CD4-positive, alpha-beta memory T cell (primary cell): ENCODE measurements at regions of chr7 and their contacts with region 1.

Region 1: GRCh38 chr7:135211179-135211945 is at the start of gene WDR91:
- DNase-seq: peak; percentile 89 to 95 (median 90)
- H3K4me3 ChIP-seq: peak within 1 kb of the TSS; percentile 71 to 80
- H3K4me3 Mint-ChIP-seq: peak within 1 kb of the TSS; percentile 96 to 99 (median 98)
- H3K27ac ChIP-seq: peak within 1 kb of the TSS; percentile 85
- H3K27ac Mint-ChIP-seq: peak within 1 kb of the TSS; percentile 92 to 99 (median 99)
- H3K4me1 ChIP-seq: peaks cover 27% of the 10 kb centered on the region
- H3K4me1 Mint-ChIP-seq: peaks cover 13 to 46% (median 28%) of the 10 kb centered on the region in 4 donors
- H3K27me3 ChIP-seq: no peaks in the 10 kb centered on the region
- H3K27me3 Mint-ChIP-seq: no peaks in the 10 kb centered on the region
- total RNA-seq, gene WDR91: 29.1 to 29.4 TPM

Region 2: GRCh38 chr7:134458806-134459698 is 752.3 kb before region 1 on chr7 and contains the start of gene AKR1B1:
- CTCF ChIA-PET with region 1: no interaction called
- POLR2A ChIA-PET with region 1: interaction called, 4 read pairs
- intact Hi-C with region 1: loop called (anchors 2 kb)
- DNase-seq: peak; percentile 84 to 89 (median 86)
- H3K4me3 ChIP-seq: peak within 1 kb of the TSS; percentile 25 to 62
- H3K4me3 Mint-ChIP-seq: peak within 1 kb of the TSS; percentile 91 to 94 (median 92)
- H3K27ac ChIP-seq: peak within 1 kb of the TSS; percentile 55
- H3K27ac Mint-ChIP-seq: peak within 1 kb of the TSS; percentile 71 to 95 (median 88)
- H3K4me1 ChIP-seq: peaks cover 36% of the 10 kb centered on the region
- H3K4me1 Mint-ChIP-seq: peaks cover 38 to 57% (median 43%) of the 10 kb centered on the region in 4 donors
- H3K27me3 ChIP-seq: no peaks in the 10 kb centered on the region
- H3K27me3 Mint-ChIP-seq: no peaks in the 10 kb centered on the region
- total RNA-seq, gene AKR1B1: 81.2 to 91.1 TPM

Region 3: DNA sequence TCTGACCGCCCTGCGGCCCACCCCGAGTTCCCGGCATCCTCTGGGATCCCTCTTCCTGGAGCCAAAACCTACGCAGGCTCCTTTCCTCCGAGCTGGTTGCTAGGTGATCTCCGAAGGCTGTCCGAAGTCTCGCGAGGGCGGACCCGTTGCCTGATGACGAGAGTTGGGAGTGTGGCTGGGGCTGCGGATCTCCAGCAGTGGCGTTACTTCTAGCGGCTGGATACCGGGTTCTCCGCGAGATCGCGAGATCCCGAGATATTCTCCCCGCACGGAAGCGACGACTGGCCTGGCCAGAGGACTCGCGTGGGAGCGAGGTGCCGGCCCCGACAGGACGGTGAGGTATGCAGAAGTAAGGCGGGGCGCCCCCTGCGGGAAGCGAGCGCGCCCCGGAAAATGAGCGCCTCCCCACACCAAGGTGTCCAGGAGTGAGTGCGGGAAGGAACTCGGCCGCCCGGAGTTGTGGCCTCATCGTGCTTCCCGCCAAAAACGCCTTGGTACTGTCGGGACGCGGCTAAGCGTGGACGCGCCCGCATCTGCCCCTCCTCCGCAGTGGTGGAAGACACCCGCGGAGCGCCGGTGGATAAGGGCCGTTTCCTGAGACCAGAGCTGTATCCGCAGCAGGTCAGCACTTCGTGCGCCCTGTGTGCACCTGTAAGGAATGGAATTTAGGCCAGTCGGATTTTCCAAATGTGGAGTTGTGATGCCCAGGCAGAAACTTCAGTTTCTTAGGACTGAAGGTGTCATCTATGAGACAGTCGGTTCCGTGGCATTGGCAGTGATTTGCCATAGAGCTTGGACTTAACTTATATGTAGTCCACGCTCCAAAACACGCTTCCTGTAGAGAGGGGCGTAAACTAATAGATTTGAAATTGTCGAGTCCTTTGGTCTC is 224.8 kb before region 1 on chr7 and contains the start of gene AGBL3:
- CTCF ChIA-PET with region 1: interaction called, 12 read pairs
- POLR2A ChIA-PET with region 1: interaction called, 20 read pairs
- intact Hi-C with region 1: loop called (anchors 1 kb)
- DNase-seq: peak; percentile 87 to 91 (median 88)
- H3K4me3 ChIP-seq: peak within 1 kb of the TSS; percentile 60 to 86
- H3K4me3 Mint-ChIP-seq: peak within 1 kb of the TSS; percentile 96 to 99 (median 98)
- H3K27ac ChIP-seq: peak within 1 kb of the TSS; percentile 80
- H3K27ac Mint-ChIP-seq: peak within 1 kb of the TSS; percentile 98 to 100 (median 98)
- H3K4me1 ChIP-seq: peaks cover 20% of the 10 kb centered on the region
- H3K4me1 Mint-ChIP-seq: peaks cover 26 to 41% (median 31%) of the 10 kb centered on the region in 4 donors
- H3K27me3 ChIP-seq: no peaks in the 10 kb centered on the region
- H3K27me3 Mint-ChIP-seq: no peaks in the 10 kb centered on the region
- total RNA-seq, gene AGBL3: 5.5 to 6.2 TPM

Region 4: GRCh38 chr7:135170274-135170997 is 40.9 kb before region 1 on chr7 and contains the start of gene CYREN:
- CTCF ChIA-PET with region 1: interaction called, 4 read pairs
- POLR2A ChIA-PET with region 1: interaction called, 40 read pairs
- intact Hi-C with region 1: loop called (anchors 1 kb)
- DNase-seq: peak; percentile 79 to 88 (median 84)
- H3K4me3 ChIP-seq: peak within 1 kb of the TSS; percentile 19 to 79
- H3K4me3 Mint-ChIP-seq: peak within 1 kb of the TSS; percentile 89 to 95 (median 90)
- H3K27ac ChIP-seq: peak within 1 kb of the TSS; percentile 93
- H3K27ac Mint-ChIP-seq: peak within 1 kb of the TSS; percentile 94 to 97 (median 97)
- H3K4me1 ChIP-seq: peaks cover 43% of the 10 kb centered on the region
- H3K4me1 Mint-ChIP-seq: peaks cover 35 to 57% (median 45%) of the 10 kb centered on the region in 4 donors
- H3K27me3 ChIP-seq: no peaks in the 10 kb centered on the region
- H3K27me3 Mint-ChIP-seq: no peaks in the 10 kb centered on the region
- total RNA-seq, gene CYREN: 45.3 to 46.5 TPM

Region 5: DNA sequence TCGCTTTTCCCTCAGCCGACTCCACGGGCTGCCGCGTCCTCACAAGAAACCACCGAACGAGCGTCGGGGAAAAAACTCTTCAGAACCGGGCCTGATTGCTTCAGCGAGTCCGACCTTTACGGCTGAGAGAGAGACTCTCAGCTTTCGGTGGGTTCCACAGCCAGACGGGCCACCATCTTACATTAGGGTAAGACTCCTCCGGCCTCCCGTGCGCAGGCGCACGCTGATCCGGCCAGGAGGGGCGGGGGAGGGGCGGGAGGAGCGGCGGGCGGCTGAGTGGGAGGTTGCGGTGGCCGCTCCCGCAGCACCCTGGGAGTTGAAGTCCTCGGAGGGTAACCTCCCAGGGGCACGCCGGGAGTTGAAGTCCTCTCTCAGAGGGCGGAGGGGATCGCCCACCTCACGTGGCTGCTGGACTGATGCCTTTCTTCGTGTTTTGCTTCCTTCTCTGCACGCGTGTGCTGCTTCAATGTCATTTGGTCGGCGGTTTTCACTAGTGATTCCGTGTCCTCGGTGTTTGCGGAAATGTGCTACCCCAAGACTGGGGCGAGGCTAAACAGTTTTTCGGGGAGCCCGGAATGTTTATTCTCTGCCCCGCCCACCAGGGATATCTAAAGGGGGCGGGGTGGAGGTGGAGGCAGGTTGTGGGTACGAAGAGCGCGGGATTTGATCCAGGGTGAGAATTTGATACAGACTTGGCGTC is 298.7 kb after region 1 on chr7 and contains the start of gene CNOT4:
- CTCF ChIA-PET with region 1: no interaction called
- POLR2A ChIA-PET with region 1: no interaction called
- intact Hi-C with region 1: loop called (anchors 1 kb)
- DNase-seq: peak; percentile 91 to 98 (median 95)
- H3K4me3 ChIP-seq: peak within 1 kb of the TSS; percentile 73 to 85
- H3K4me3 Mint-ChIP-seq: no peak within 1 kb of the TSS
- H3K27ac ChIP-seq: peak within 1 kb of the TSS; percentile 95
- H3K27ac Mint-ChIP-seq: no peak within 1 kb of the TSS
- H3K4me1 ChIP-seq: peaks cover 34% of the 10 kb centered on the region
- H3K4me1 Mint-ChIP-seq: peaks cover 2 to 12% (median 6%) of the 10 kb centered on the region in 4 donors
- H3K27me3 ChIP-seq: no peaks in the 10 kb centered on the region
- H3K27me3 Mint-ChIP-seq: no peaks in the 10 kb centered on the region
- total RNA-seq, gene CNOT4: 33.9 to 35.0 TPM

Region 6: GRCh38 chr7:135662373-135663114 is 451.2 kb after region 1 on chr7 and contains the start of gene STMP1:
- CTCF ChIA-PET with region 1: no interaction called
- POLR2A ChIA-PET with region 1: no interaction called
- intact Hi-C with region 1: loop called (anchors 1 kb)
- DNase-seq: peak; percentile 92 to 94 (median 93)
- H3K4me3 ChIP-seq: peak within 1 kb of the TSS; percentile 86 to 98
- H3K4me3 Mint-ChIP-seq: peak within 1 kb of the TSS; percentile 91 to 98 (median 96)
- H3K27ac ChIP-seq: peak within 1 kb of the TSS; percentile 76
- H3K27ac Mint-ChIP-seq: peak within 1 kb of the TSS; percentile 83 to 98 (median 95)
- H3K4me1 ChIP-seq: peaks cover 30% of the 10 kb centered on the region
- H3K4me1 Mint-ChIP-seq: peaks cover 25 to 52% (median 38%) of the 10 kb centered on the region in 4 donors
- H3K27me3 ChIP-seq: no peaks in the 10 kb centered on the region
- H3K27me3 Mint-ChIP-seq: no peaks in the 10 kb centered on the region
- total RNA-seq, gene STMP1: 29.5 to 29.7 TPM

Region 7: GRCh38 chr7:135825406-135825805 is 614.0 kb after region 1 on chr7:
- CTCF ChIA-PET with region 1: no interaction called
- POLR2A ChIA-PET with region 1: no interaction called
- intact Hi-C with region 1: no loop called
- DNase-seq: no peak
- H3K4me3 ChIP-seq: no peak overlapping the region
- H3K4me3 Mint-ChIP-seq: no peak overlapping the region
- H3K27ac ChIP-seq: no peak overlapping the region
- H3K27ac Mint-ChIP-seq: no peak overlapping the region
- H3K4me1 ChIP-seq: peaks cover 10% of the 10 kb centered on the region
- H3K4me1 Mint-ChIP-seq: peaks cover 0 to 14% (median 7%) of the 10 kb centered on the region in 4 donors
- H3K27me3 ChIP-seq: no peaks in the 10 kb centered on the region
- H3K27me3 Mint-ChIP-seq: no peaks in the 10 kb centered on the region